Transverse colon (tissue), 4 donors: ENCODE measurements at regions of chr4 and their contacts with region 1.

Region 1: DNA sequence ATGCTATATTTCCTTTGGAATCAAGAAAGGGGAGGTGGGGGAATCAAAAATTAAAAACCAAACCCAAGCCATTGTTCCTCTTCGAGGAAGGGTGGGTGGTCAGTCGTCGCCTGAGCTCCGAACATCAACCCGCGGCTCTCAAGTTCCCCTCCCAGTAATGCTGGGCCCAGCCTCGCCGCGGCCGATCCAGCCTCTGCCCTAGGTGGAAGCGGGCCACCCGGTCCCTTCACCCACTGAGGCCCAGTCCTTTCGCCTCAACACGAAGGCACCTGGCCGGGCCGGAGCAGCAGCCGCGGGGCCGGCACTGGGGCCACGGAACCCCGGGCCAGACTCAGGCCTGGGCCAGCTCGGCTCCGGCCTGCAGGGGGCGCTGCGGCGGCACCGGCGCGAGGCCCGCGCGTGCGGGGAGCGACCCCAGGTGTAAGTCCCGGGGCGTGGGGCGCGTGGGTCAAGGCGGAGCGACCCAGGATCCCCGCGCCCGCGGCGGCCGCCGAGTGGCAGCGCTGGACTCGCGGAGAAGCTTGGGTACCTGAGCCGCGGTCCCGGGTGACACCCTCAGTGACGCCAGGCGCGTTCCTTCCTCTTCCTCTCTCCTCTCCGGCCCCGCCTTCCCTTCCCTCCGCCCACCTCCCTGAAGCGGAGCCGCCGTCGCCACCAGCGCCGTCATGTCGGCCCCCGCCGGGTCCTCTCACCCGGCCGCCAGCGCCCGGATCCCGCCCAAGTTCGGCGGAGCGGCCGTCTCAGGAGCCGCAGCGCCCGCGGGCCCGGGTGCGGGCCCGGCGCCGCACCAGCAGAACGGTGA is at the start of gene SEC24B:
- DNase-seq: peak; percentile 92
- H3K4me3 ChIP-seq: peak within 1 kb of the TSS; percentile 71 to 89 (median 84)
- H3K27ac ChIP-seq: peak within 1 kb of the TSS; percentile 92 to 95 (median 93)
- H3K4me1 ChIP-seq: peaks cover 14 to 43% (median 30%) of the 10 kb centered on the region in 4 donors
- H3K27me3 ChIP-seq: no peaks in the 10 kb centered on the region
- CTCF ChIP-seq: peak; percentile 29 to 93 (median 83)
- EP300 ChIP-seq: no peak
- POLR2A ChIP-seq: peak; percentile 65
- total RNA-seq, gene SEC24B: 14.3 to 44.1 (median 35.4) TPM

Region 2: GRCh38 chr4:109548655-109549054 is 115.2 kb after region 1 on chr4:
- in situ Hi-C with region 1: loop called in 2 of 4 experiments (anchors 25 kb)
- intact Hi-C with region 1: no loop called
- DNase-seq: no peak
- H3K4me3 ChIP-seq: no peak overlapping the region
- H3K27ac ChIP-seq: no peak overlapping the region
- H3K4me1 ChIP-seq: no peaks in the 10 kb centered on the region
- H3K27me3 ChIP-seq: no peaks in the 10 kb centered on the region
- CTCF ChIP-seq: no peak
- EP300 ChIP-seq: no peak
- POLR2A ChIP-seq: no peak

Region 3: GRCh38 chr4:109702950-109703663 is 269.7 kb after region 1 on chr4 and contains the start of gene CASP6:
- in situ Hi-C with region 1: loop called in 3 of 4 experiments (anchors 25 kb)
- intact Hi-C with region 1: no loop called
- DNase-seq: peak; percentile 93
- H3K4me3 ChIP-seq: peak within 1 kb of the TSS; percentile 57 to 83 (median 71)
- H3K27ac ChIP-seq: peak within 1 kb of the TSS; percentile 91 to 95 (median 93)
- H3K4me1 ChIP-seq: peaks cover 6 to 52% (median 28%) of the 10 kb centered on the region in 4 donors
- H3K27me3 ChIP-seq: no peaks in the 10 kb centered on the region
- CTCF ChIP-seq: peak; percentile 69 to 88 (median 81)
- EP300 ChIP-seq: no peak
- POLR2A ChIP-seq: peak; percentile 87
- total RNA-seq, gene CASP6: 34.4 to 87.7 (median 58.9) TPM